ENCODE measurements at regions of chr19 and their contacts with region 1.

Region 1: GRCh38 chr19:51660975-51661600 is 14.5 kb upstream of the SIGLEC14 start:
- DNase-seq: peak; percentile 95
- ATAC-seq: peak; percentile 85
- H3K4me3 ChIP-seq: no peak overlapping the region
- H3K27ac ChIP-seq: no peak overlapping the region
- H3K4me1 ChIP-seq: peaks cover 5% of the 10 kb centered on the region
- H3K27me3 ChIP-seq: peaks cover 18% of the 10 kb centered on the region; the same call in 1 of the 2 replicates
- CTCF ChIP-seq: peak; percentile 69

Region 2: GRCh38 chr19:51422053-51422448 is 239.0 kb before region 1 on chr19:
- CTCF ChIA-PET with region 1: interaction called, 16 read pairs
- POLR2A ChIA-PET with region 1: no interaction called
- intact Hi-C with region 1: loop called (anchors 1 kb)
- DNase-seq: peak; percentile 96
- ATAC-seq: peak; percentile 92
- H3K4me3 ChIP-seq: no peak overlapping the region
- H3K27ac ChIP-seq: no peak overlapping the region
- H3K4me1 ChIP-seq: no peaks in the 10 kb centered on the region
- H3K27me3 ChIP-seq: peaks cover 40% of the 10 kb centered on the region
- CTCF ChIP-seq: peak; percentile 97

Region 3: GRCh38 chr19:51473009-51473707 is 187.9 kb before region 1 on chr19:
- CTCF ChIA-PET with region 1: interaction called, 8 read pairs
- POLR2A ChIA-PET with region 1: no interaction called
- intact Hi-C with region 1: loop called (anchors 1 kb)
- DNase-seq: peak; percentile 93
- ATAC-seq: peak; percentile 61
- H3K4me3 ChIP-seq: no peak overlapping the region
- H3K27ac ChIP-seq: no peak overlapping the region
- H3K4me1 ChIP-seq: peaks cover 27% of the 10 kb centered on the region
- H3K27me3 ChIP-seq: no peaks in the 10 kb centered on the region
- CTCF ChIP-seq: peak; percentile 96

Region 4: GRCh38 chr19:51607920-51608562 is 53.0 kb before region 1 on chr19:
- CTCF ChIA-PET with region 1: interaction called, 9 read pairs
- POLR2A ChIA-PET with region 1: no interaction called
- intact Hi-C with region 1: loop called (anchors 1 kb)
- DNase-seq: peak; percentile 90
- ATAC-seq: peak; percentile 62
- H3K4me3 ChIP-seq: no peak overlapping the region
- H3K27ac ChIP-seq: no peak overlapping the region
- H3K4me1 ChIP-seq: no peaks in the 10 kb centered on the region
- H3K27me3 ChIP-seq: peaks cover 24% of the 10 kb centered on the region; the same call in 1 of the 2 replicates
- CTCF ChIP-seq: peak; percentile 97

Region 5: GRCh38 chr19:51792932-51793331 is 131.8 kb after region 1 on chr19:
- CTCF ChIA-PET with region 1: no interaction called
- POLR2A ChIA-PET with region 1: no interaction called
- intact Hi-C with region 1: no loop called
- DNase-seq: no peak
- ATAC-seq: no peak
- H3K4me3 ChIP-seq: no peak overlapping the region
- H3K27ac ChIP-seq: no peak overlapping the region
- H3K4me1 ChIP-seq: peaks cover 17% of the 10 kb centered on the region
- H3K27me3 ChIP-seq: no peaks in the 10 kb centered on the region
- CTCF ChIP-seq: no peak